ENCODE measurements at regions of chr1 and their contacts with region 1.

Region 1: GRCh38 chr1:233518349-233518748 is 95.6 kb upstream of the KCNK1 start:
- DNase-seq: peak; percentile 42
- CTCF ChIP-seq: peak; percentile 55

Region 2: GRCh38 chr1:233211595-233211994 is 306.8 kb before region 1 on chr1:
- CTCF ChIA-PET with region 1: no interaction called
- POLR2A ChIA-PET with region 1: no interaction called
- DNase-seq: no peak
- CTCF ChIP-seq: no peak

Region 3: DNA sequence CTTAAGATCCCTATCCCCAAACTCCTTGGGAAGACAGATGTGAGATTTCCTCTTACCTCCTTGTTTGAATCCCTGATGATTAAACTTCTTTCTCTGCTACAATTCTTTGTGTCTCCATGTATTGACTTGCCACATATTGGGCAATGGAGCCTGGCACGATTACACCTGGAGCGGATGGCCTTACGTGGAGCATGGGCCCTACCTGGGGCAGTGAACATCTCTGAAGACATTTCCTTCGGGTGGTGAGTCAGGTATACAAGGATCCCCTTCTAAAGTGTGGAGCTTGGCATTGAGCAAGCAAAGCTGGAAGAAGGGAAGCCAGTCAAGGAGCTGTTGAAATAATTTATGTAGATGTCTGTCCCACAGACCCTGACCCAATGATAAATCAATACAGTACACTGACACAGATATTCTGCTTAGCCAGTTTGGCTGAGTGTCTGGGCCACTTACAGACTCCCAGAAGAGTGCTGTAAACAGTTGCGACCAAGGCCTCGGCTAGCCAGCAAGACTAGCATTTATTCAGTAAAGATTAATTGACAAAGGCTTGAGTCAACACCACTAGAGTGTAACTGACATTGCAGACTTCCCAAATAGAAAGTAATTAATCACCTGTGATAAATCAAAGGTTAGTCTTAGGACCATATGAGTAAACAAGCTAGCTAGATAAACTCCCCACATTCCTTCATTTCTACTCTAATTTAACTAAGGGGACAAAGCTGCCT is 12.5 kb after region 1 on chr1:
- CTCF ChIA-PET with region 1: interaction called, 40 read pairs
- POLR2A ChIA-PET with region 1: no interaction called
- DNase-seq: no peak
- CTCF ChIP-seq: no peak

Region 4: GRCh38 chr1:233790662-233791375 is 272.5 kb after region 1 on chr1:
- CTCF ChIA-PET with region 1: interaction called, 10 read pairs
- POLR2A ChIA-PET with region 1: no interaction called
- DNase-seq: peak; percentile 61
- CTCF ChIP-seq: peak; percentile 86

Measured in GM10248 (cell line).